ENCODE measurements at regions of chr1 and their contacts with region 1.

Region 1: DNA sequence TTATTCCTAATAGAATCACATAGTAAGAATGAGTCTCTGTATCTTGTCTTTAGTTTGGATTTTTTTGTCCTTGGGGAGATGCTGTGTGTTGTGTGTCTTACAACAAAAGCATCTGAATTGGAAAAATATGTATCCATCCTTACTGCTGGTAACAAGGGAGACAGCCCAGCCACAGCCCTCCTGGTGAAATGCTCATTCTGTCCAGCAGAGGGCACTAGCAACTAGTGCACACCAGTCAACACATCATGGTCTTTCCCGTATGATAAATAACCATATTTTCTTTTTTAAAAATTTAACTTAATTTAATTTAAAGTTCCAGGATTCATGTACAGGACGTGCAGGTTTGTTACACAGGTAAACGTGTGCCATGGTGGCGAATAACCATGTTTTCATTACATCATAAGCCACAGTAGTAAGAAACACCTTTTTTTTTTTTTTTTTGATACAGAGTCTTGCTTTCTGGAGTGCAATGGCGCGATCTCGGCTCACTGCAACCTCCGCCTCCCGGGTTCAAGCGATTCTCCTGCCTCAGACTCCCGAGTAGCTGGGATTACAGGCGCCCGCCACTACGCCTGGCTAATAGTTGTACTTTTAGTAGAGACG is 245.1 kb downstream of the PTBP2 start:
- DNase-seq: no peak

Region 2: GRCh38 chr1:96764469-96764868 is 202.2 kb before region 1 on chr1:
- intact Hi-C with region 1: no loop called
- DNase-seq: no peak

Region 3: DNA sequence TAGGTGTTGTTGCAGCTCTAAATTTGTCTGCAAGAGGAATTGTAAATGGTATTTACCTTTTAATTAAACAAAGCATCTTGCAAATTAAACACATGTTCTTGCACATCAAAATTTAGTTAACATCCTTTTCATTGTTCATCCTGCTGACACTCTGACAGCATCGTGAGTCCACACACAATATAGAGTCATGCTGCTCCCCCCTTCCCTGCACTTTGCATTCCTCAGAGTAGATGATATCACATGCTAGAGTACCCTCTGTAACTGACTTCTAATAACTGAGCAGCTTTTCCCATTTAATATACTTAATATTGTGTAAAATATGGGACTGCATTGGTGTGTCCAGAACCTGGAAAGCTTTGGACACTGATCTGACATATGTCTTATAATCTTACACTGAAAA is 1093.0 kb after region 1 on chr1:
- intact Hi-C with region 1: loop called (anchors 5 kb)
- DNase-seq: no peak